ENCODE measurements at regions of chr1 and their contacts with region 1.

Region 1: DNA sequence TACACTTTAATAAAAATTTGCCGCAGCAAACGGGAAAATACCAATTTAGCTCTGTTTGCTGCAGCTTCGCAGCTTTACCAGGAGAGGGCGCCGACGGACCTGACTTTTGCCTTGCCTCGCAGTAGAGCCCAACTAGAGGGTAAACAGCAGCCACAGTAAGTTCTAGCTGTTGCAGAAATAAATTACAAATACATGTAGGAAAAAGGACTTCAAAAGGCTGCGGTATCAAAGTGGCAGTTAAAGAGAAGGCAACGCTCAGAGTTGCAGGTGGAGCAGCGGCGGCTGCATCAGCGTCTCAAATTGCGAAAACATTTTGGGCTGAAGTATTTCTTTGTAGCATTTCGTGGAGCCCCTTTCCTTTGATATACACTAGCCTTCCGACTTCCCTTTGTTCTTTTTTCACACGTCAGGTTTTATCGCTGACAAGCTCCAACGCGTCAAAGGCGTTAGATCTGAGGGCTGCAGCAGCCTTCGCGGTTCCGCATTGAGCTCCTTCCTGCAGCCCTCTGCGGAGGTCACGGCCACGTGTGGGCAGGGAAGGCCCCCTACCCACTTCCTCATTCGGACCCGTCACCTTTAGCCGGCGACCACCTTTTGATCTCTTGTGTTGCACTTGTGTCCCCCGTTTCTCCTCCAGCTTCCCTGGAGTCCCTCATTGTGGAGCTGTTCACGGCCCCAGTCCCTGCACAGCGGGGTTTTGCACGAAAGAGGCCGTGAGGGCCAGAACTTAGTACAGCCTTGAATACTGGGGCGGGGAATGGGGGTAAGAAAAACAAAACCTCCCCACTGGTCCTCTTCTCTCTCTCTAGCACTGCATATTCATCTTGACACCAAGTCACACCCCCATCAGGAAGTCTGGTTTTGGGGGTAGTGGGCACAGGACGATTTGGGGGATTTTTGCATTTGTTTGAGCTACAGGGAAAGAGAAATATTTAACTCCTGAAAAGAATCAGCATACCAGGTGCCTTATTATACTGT is 72.8 kb downstream of the S1PR1 start:
- DNase-seq: peak; percentile 57 to 94 (median 86)
- ATAC-seq: peak; percentile 78
- H3K4me3 Mint-ChIP-seq: peak overlapping the region; percentile 78 to 90 (median 85)
- H3K27ac Mint-ChIP-seq: peak overlapping the region; percentile 95 to 100 (median 99)
- H3K4me1 Mint-ChIP-seq: peaks cover 33 to 82% (median 68%) of the 10 kb centered on the region in 4 donors
- H3K27me3 Mint-ChIP-seq: no peaks in the 10 kb centered on the region

Region 2: DNA sequence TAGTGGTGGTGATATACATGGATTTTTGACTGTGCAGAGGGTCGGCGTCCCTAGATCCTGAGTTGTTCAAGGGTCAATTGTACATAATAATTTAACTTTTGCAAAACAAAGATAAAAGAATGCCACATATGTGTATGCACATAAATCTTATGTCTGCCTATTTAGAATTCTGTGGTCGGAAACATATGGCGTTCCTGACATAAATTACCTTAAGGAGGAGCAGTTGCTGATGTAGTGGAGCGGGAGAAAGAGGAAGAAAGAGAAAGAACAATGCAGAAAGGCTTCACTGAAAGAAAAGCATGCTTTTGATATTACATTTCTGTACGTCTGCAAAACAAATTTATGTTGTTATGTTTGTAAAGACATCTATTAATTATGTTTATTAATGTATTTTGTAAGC is 32.8 kb before region 1 on chr1:
- POLR2A ChIA-PET with region 1: no interaction called
- DNase-seq: no peak
- ATAC-seq: no peak
- H3K4me3 Mint-ChIP-seq: peak overlapping the region in 3 of 10 donors; percentile 2 to 46 (median 22)
- H3K27ac Mint-ChIP-seq: peak overlapping the region in 8 of 10 donors; percentile 24 to 99 (median 82)
- H3K4me1 Mint-ChIP-seq: peaks cover 39 to 71% (median 64%) of the 10 kb centered on the region in 4 donors
- H3K27me3 Mint-ChIP-seq: no peaks in the 10 kb centered on the region

Region 3: DNA sequence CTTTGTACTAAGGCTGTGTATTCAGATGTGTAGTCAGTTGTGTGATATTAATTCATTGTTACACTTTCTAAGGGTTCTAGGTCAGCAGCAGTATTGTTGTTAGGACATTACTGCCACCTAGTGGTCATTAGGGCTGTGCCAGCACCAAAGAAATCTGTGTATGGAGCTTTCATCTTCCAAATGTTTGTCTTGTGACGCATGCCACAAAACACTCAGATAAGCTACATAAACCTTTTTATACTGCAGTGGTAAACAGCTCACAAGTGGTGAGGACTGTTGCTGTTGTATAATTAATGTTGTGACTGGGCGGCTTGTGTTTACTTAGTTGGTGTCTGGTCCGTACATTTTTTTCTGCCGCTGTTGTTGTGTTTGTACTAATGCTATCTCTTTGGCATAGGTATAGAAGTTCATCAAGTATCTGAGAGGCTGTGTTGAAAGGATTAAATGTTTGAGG is 21.1 kb before region 1 on chr1:
- POLR2A ChIA-PET with region 1: interaction called, 10 read pairs
- DNase-seq: peak; percentile 10 to 84 (median 72)
- ATAC-seq: peak; percentile 58 to 70
- H3K4me3 Mint-ChIP-seq: peak overlapping the region in 5 of 10 donors; percentile 2 to 58 (median 26)
- H3K27ac Mint-ChIP-seq: peak overlapping the region; percentile 65 to 87 (median 84)
- H3K4me1 Mint-ChIP-seq: peaks cover 39 to 81% (median 74%) of the 10 kb centered on the region in 4 donors
- H3K27me3 Mint-ChIP-seq: no peaks in the 10 kb centered on the region

Region 4: DNA sequence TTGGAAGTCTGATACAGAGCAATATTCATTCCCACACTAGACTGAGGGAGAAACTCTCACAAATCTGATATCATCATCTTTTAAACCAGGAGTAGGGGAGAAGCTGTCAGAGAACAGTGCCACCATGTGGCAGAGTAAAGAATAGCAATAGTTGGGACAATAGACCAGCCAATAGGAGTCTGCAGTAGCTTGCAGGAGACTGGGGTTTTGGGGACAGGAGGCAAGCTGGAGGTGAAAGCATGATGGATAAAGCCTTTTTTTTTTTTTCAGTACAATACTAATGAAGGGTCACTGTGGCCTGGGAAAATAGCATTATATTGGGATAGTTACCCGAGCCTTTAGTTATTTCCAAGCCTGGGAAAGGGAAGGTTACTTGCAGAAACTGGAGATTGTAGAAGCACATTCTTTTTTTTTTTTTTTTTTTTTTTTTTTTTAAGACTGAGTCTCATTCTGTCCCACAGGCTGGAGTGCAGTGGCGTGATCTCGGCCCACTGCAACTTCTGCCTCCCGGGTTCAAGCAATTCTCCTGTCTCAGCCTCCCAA is 47.9 kb after region 1 on chr1:
- POLR2A ChIA-PET with region 1: interaction called, 47 read pairs
- DNase-seq: peak; percentile 41 to 90 (median 78)
- ATAC-seq: peak; percentile 100
- H3K4me3 Mint-ChIP-seq: peak overlapping the region in 3 of 10 donors; percentile 75 to 83 (median 82)
- H3K27ac Mint-ChIP-seq: peak overlapping the region in 9 of 10 donors; percentile 51 to 93 (median 87)
- H3K4me1 Mint-ChIP-seq: peaks cover 7 to 13% (median 10%) of the 10 kb centered on the region in 4 donors
- H3K27me3 Mint-ChIP-seq: no peaks in the 10 kb centered on the region